ENCODE measurements at regions of chr5 and their contacts with region 1.

Region 1: GRCh38 chr5:73519531-73520283 is 21.5 kb downstream of the BTF3 start:
- DNase-seq: peak; percentile 81
- H3K4me3 ChIP-seq: no peak overlapping the region
- H3K27ac ChIP-seq: no peak overlapping the region
- H3K4me1 ChIP-seq: peaks cover 4% of the 10 kb centered on the region
- H3K27me3 ChIP-seq: no peaks in the 10 kb centered on the region
- CTCF ChIP-seq: peak; percentile 66

Region 2: GRCh38 chr5:73540192-73540591 is 20.5 kb after region 1 on chr5:
- intact Hi-C with region 1: loop called (anchors 2 kb)
- DNase-seq: no peak
- H3K4me3 ChIP-seq: no peak overlapping the region
- H3K27ac ChIP-seq: no peak overlapping the region
- H3K4me1 ChIP-seq: peaks cover 8% of the 10 kb centered on the region
- H3K27me3 ChIP-seq: no peaks in the 10 kb centered on the region
- CTCF ChIP-seq: no peak

Region 3: GRCh38 chr5:74112372-74113195 is 592.9 kb after region 1 on chr5:
- intact Hi-C with region 1: no loop called
- DNase-seq: no peak
- H3K4me3 ChIP-seq: no peak overlapping the region
- H3K27ac ChIP-seq: no peak overlapping the region
- H3K4me1 ChIP-seq: no peaks in the 10 kb centered on the region
- H3K27me3 ChIP-seq: no peaks in the 10 kb centered on the region
- CTCF ChIP-seq: no peak

Measured in colonic mucosa (tissue), 4 donors.